ENCODE measurements at regions of chr1 and their contacts with region 1.

Region 1: GRCh38 chr1:164914208-164914607 is 355.2 kb downstream of the PBX1 start:
- DNase-seq: no peak
- ATAC-seq: peak; percentile 66

Region 2: DNA sequence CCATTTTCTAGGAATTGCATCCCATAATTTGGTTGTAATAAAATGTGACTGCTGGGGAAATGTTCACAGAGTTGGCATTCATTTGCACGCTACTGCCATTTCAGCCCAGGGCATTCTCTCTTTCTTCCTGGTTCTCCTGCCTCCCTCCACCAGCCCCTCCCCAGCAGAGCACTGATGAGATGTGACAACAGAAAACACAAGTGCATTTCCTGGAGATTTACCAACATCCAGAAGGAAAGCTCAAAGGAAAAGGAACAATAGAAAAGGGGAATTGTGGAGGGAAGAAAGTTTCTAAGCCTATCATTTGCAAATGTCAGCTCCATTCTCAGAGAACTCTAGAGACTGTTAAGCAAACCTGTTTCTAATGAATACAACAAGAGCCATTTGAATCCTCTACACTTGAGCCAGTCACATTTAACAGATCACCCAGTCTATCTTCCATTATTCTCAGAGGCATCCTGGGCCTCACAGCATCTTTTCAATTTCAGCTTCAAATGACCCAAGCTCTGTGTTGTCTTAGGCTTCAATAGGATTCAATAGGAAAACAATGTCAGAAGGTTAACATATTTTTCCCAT is 750.8 kb before region 1 on chr1:
- intact Hi-C with region 1: loop called (anchors 10 kb)
- DNase-seq: no peak
- ATAC-seq: no peak

Region 3: DNA sequence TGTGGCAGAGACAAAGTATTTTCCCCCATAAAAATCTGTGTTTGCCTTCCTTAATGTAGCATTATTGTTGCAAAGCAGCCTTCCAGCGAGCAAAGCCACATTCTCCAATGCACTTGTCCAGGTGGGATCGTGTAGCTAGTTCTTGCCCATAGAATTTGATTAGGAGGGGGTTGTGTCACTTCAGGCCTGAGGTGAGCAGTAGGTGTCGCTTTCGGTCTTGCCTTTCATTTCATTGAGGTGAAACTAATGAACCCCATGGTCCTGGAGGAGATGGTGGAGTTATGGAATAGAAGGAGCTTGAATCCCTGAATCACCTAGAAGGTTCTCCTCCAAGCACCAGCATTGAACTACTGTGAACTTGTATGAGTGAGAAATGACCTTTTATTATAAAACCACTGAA is 674.1 kb before region 1 on chr1:
- intact Hi-C with region 1: loop called (anchors 5 kb)
- DNase-seq: no peak
- ATAC-seq: no peak

Region 4: DNA sequence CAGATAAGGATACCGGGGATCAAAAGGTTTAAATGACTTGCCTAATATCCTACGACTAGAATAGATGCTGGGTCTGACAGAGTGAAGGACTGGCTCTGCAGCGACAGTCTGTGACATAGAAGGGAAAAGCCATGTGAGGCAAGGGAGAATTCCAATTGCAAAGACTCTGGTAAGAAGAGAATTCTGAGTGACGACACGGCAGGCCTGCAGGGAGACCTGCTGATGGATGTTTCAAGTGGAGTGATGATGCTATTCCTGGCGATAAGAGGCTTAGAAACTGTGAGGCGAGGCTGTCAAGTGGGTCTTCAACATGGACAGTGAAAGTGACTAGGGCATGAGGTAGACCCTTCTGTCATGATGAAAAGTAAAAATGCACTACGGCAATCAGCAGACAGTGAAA is 531.8 kb before region 1 on chr1:
- intact Hi-C with region 1: no loop called
- DNase-seq: no peak
- ATAC-seq: peak; percentile 80

Region 5: DNA sequence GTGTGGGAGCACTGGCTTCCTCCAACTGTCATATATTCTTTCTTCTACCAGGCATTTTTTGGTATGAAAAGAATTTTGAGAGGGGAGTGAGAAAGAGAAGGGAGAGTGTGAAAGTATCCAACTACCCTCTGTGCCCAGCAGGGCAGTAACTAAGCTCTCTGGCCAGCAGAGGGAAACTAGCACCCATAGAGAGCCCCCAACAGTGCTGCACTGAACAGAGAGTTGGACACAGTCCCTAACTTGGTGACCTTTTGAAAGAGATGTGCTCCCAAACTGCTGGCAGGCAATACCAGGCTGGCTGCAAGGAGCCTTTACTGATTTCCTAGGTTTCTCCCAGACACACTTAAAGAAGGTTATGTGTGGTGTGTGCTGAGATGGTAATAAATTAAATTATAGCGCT is 474.0 kb before region 1 on chr1:
- intact Hi-C with region 1: loop called (anchors 10 kb)
- DNase-seq: no peak
- ATAC-seq: peak; percentile 91

Region 6: DNA sequence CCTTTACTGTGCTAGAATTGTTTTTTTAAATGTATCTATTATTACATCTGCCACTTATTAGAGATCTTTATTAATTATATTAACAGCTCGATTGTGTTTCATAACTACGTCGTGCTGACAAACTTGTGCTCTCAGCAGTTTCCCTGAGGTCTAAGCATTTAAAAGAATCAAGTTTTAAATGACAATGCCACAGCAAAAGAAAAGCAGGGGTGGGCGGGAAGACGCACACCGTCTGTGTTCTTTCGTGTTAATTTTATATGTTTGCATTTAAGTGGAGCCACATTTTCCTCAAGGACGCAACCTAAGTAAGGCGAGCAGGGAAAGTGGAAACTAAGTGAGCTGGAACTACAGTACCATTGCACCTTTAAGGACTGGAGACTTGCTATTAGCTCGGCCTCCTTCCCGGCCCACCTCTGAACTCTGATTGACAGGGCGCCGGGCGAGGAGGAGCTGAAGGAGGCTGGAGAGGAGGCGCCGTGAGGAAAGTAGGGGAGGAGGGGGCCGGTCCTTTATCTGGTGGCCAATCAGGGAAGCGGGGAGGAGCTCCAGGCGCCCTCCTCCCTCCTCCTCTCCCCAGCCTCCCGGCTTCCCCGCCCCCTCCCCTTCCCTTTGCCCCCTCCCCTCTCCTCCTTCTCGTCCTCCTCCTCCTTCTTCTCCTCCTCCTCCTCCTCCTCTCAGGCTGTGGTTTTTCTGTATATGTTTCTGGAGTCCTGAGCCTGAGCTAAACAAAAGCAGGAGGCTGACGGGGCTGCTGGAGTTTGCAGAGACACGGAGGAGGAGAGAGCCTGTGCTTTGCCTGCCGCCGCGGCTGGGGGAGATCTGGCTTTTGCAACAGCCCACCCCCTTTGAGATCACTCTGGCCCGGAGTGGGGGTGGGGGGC is 355.5 kb before region 1 on chr1 and contains the start of gene PBX1:
- intact Hi-C with region 1: loop called (anchors 2 kb)
- DNase-seq: peak; percentile 98
- ATAC-seq: peak; percentile 99
- total RNA-seq, gene PBX1: 78.8 TPM

Region 7: GRCh38 chr1:164823486-164824279 is 90.5 kb before region 1 on chr1:
- intact Hi-C with region 1: loop called (anchors 2 kb)
- DNase-seq: no peak
- ATAC-seq: peak; percentile 87

Region 8: DNA sequence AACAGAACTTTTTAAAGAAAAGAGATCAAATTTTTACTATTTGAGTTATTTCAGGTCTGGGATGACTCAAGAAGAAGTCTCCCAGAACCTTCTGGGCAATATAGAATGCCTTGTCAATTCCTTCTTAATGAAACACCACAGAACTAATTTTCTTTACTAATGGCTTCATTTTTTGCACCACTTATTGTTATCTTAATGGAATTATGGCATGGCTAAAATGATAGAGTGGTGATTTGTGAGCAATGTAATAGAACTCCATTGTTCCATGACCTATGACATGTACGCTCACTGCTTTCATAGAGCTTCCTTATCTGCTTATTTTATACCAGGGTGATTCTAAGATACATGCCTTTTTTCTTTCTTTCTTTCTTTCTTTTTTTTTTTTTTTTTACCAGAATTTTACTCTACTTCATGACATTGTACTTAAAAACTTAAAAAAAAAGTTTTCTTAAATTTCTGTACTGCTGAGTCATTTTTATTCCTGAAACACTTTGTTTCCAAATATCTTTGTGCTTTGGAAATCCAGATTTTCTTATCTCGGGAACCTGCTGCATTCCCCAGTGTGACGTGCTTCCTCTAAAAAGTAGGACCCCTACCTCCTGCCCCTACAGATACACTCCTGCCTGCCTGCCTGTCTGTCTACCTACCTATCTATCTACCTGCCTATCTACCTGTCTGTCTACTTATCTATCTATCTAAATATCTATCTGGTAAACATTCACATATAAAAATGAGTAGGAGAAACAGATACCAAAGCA is 70.3 kb before region 1 on chr1:
- intact Hi-C with region 1: no loop called
- DNase-seq: no peak
- ATAC-seq: no peak

Measured in Right ventricle myocardium inferior (tissue), 1 donor.